ENCODE measurements at regions of chr15 and their contacts with region 1.

Region 1: DNA sequence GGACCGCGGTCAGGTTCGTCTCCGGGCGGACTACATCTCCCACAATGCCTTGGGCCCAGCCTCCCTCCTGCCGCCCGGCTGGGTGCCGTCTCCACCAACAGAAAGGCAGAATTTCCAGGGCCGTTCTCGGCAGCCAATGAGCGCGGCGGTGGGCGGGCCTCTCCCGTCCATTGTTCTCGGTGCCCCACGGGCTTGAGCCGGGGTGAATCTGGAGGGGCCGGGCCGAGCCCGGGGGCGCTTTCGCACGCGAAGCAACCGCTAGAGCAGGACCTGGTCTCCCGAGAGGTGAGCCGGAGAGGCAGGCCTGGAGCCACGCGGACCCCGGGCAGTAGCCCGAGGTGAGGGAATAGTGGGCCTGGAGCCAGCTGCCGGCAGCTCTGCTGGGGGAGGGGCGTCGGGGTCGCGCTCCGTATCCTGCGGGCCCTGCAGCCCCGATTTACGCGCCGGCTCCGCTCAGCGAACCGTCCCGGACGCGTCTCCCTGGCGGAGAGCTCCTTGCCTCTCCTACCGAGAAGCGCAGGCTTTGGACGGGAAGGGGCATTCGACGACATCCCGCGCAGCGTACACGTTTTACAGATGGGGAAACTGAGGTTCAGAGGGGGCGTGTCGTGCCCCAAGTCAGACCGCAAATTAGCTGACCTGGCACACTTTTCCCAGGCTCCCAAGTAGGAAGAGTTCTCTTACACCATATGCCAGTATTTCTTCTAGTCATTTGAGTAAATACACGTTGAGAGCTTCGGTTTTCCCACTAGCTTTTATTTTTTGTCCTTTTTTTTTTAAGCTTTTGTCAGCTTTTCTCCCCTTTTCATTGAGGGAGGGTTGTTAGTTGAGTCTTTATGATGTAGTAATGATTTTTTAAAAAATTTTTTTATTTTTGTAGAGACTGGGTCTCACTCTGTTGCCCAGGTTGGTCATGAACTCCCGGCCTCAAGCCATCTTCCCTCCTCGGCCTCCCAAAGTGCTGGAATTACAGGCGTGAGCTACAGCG is at the start of gene ZSCAN2:
- DNase-seq: peak; percentile 98
- total RNA-seq, gene ZSCAN2: 3.0 to 4.7 TPM

Region 2: DNA sequence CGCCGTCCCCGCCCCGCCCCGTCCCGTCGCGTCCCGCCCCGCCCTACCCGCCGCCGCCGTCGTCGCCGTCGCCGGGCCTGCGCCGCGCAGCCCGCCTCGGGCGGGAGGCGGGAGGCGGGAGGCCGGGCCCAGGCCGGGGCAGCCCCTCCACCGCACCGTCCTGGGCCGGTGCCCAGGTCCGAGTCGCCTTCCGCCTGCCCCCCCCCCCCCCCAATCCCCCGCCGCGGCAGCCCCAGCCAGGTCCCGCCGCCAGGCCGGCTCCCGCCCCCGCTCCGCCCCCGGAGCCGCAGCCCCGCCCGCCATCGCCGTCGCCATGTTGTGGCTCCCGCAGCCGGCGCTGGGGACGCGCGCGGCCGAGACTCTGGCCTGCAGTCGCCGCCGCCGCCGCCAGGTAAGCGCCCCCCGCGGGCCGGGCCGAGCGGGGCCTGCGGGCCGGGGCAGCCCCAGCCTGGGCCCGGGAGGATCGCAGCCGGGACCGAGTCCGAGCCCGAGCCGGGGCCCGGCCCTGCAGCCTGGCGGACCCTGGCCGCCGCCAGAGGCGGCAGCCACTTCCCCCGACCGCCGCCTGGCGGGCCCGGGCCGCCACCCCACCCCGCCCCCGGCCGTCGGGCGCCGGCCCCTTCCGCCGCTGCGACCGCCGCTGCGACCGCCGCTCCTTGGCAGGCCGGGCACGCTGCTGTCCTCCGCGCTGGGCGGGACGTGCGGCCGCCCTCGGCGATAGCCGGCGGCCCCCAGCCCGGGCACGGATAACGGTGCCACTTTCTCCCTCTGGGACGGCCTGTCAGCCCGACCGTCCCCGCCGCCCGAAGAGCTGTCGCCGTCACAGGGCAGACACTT is 147.3 kb after region 1 on chr15 and contains the start of gene ZNF592:
- intact Hi-C with region 1: loop called in 1 of 2 experiments (anchors 10 kb)
- DNase-seq: peak; percentile 94
- total RNA-seq, gene ZNF592: 21.3 to 21.8 TPM

Region 3: DNA sequence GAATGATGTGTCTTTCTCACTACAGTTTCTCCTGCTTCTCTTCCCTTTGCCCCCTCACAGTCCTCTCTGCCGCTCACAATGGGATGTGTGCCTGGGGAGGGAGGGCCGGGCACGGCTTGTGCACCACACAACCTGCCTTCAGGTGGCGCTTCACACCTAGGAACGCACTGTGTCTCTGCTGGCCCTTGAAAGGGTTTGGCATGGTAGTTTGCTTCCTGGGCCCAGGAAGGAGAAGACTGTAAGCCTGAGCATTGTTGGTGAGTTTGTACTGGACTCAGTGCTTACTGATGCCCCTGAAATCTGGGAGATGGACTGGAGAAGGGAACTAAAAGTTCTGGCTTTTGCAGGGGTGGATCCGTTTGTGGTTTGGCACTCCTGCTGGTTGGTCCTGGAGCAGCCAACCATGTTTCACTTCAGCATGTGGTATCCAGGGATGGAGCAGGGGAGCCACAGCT is 225.3 kb after region 1 on chr15:
- intact Hi-C with region 1: loop called in 1 of 2 experiments (anchors 10 kb)
- DNase-seq: no peak

Measured in posterior vena cava (tissue), 2 donors.